AG04449 (cell line): ENCODE measurements at regions of chr3 and their contacts with region 1.

Region 1: DNA sequence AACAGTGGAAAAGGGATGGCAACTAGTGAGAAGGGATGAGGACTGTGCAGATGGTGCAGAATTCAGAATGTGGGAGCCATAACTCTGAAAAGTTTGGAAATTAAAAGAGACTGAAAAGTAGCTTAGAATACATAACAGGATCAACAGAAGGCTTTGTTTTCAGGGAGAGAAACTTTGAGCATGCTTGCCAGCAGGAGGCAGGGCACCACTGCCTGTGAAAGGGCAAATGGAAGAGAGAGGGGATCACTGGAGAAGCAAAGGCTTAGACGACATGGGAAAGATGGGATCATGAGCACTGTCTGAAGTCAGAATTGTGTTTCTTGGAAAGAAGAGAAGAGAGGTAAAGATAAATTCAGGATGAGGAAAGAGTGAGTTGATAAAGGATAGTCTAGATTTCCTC is 99.6 kb downstream of the ABI3BP start:
- DNase-seq: no peak
- H3K4me3 ChIP-seq: no peak overlapping the region
- CTCF ChIP-seq: peak; percentile 64

Region 2: DNA sequence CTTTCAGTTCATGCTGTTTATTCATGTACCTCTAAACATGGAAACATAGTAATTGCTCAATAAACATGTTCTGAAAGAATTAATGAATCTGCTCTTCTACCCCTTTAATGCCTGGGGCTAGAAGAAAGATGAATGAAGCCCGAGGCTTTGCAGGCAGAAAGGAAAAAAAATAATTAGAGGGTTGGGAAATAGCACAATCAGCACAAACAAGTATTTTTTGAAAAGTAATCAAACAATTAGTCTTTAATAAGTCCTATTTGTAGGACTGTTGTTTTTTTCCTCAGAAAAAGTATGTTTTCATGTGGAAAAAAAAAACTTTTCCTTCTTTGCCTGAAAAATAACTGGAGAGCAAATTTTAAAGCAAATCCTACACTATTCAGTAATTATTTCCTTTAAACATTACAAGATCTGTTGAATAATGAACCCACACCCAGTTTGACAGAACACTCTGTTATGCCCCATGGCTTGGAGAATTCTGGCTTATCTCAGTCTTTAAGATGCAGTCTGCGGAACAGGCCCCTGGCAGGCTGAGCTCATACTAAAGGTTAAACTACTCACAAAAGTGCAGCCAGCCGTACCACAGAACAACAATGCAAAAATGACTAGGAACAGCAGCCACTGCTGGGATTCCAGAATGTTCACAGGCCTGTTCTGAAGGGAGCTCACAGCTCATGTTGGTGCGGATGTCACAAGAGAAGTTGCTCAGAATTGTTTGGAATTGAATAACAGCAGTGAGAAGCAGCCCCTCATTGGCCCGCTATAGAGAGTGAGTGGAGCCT is 20.5 kb after region 1 on chr3:
- CTCF ChIA-PET with region 1: no interaction called
- POLR2A ChIA-PET with region 1: no interaction called
- DNase-seq: no peak
- H3K4me3 ChIP-seq: no peak overlapping the region
- CTCF ChIP-seq: no peak

Region 3: DNA sequence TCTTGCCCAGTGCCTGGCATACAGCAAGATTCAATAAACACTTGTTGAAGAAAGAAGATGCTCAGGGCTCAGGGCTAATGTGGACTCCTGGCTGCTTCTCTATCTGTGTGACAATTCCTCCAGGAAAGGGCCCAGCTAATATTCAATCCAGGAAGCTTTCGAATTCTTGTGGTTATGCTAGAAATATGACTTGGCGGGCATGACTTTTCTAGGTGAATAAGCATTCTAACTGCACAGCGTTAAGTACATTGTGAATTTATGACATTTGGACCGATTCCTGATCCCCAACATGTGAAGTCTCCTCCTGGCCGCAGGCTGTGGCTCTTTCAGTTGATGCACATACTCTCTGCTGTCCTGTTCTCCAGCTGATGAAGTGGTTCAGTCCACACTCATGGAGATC is 309.8 kb after region 1 on chr3:
- CTCF ChIA-PET with region 1: interaction called, 129 read pairs
- POLR2A ChIA-PET with region 1: no interaction called
- DNase-seq: no peak
- H3K4me3 ChIP-seq: no peak overlapping the region
- CTCF ChIP-seq: no peak